ENCODE measurements at regions of chr3 and their contacts with region 1.

Region 1: DNA sequence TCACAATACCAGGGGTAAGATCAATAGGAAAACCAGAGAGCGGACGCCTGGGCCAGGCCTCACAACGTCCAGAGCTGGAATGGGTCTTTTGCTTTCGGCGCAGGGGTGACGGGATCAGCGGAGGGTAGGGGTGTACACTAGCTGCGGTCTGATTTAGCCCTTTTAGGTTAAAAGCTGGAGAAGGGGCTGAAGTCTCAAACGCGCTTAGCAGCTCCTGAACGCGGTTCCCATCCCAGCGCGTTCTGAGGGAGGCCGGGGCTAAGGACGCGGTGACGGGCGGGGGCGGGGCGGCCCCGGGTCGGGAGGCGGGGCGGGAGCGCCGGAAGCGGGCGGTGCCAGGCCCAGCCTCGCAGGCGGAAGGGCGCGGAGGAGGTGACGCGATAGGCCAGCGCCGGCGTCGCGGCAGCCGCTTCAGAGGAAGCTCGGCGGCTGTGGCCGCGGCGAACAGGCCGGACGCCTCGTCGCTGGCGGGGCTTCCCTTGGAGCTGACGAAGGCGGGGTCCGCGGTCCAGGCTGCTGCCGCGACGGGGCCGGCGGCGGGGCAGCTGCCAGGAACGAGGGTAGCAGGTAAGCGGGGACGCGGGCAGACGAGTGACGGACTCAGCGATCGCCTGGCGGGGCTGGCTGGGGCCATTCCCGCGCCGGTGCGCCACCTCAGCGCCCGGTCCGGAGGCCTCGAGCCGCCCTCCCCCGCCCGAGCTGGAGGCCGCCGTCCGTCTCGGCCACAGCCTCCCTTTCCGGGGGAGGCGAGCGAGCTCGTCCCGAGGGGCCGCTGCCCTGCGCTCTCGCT is at the start of gene SENP5:
- DNase-seq: peak; percentile 33
- ATAC-seq: peak; percentile 98
- H3K4me3 ChIP-seq: peak within 1 kb of the TSS; percentile 83 to 96
- H3K27ac ChIP-seq: peak within 1 kb of the TSS; percentile 97
- H3K4me1 ChIP-seq: peaks cover 14% of the 10 kb centered on the region
- H3K27me3 ChIP-seq: no peaks in the 10 kb centered on the region
- CTCF ChIP-seq: no peak
- total RNA-seq, gene SENP5: 40.0 TPM

Region 2: GRCh38 chr3:196377321-196377720 is 490.4 kb before region 1 on chr3:
- CTCF ChIA-PET with region 1: no interaction called
- POLR2A ChIA-PET with region 1: no interaction called
- in situ Hi-C with region 1: no loop called
- intact Hi-C with region 1: no loop called
- DNase-seq: no peak
- ATAC-seq: no peak
- H3K4me3 ChIP-seq: no peak overlapping the region
- H3K27ac ChIP-seq: no peak overlapping the region
- H3K4me1 ChIP-seq: no peaks in the 10 kb centered on the region
- H3K27me3 ChIP-seq: no peaks in the 10 kb centered on the region
- CTCF ChIP-seq: no peak

Region 3: DNA sequence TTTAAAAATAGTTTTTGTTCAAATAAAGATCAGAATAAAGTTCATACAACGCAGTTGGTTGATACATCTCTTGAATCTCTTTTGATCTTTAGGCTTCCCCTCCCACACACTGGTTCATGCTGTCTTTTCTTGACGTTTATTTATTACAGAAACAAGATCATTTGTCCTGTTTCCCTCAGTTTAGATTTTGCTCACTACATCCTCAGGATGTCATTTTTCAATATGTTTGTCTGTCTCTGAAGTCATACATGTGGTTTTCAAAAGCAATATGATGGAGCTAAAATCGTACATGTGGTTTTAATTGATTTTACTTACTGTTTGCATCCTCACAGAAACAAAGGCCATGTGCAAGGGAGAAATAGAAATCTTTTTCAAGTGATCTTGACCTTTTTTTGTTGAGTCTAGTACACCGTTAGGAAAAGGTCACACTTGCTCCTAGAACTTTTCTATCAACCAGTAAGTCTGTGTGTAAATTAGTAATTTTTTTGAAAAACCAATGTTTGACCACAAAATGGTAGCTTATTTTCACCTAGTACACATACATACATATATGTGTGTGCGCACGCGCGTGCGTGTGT is 63.7 kb before region 1 on chr3:
- CTCF ChIA-PET with region 1: no interaction called
- POLR2A ChIA-PET with region 1: interaction called, 10 read pairs
- in situ Hi-C with region 1: no loop called
- intact Hi-C with region 1: no loop called
- DNase-seq: no peak
- ATAC-seq: no peak
- H3K4me3 ChIP-seq: no peak overlapping the region
- H3K27ac ChIP-seq: no peak overlapping the region
- H3K4me1 ChIP-seq: peaks cover 8% of the 10 kb centered on the region
- H3K27me3 ChIP-seq: no peaks in the 10 kb centered on the region
- CTCF ChIP-seq: no peak

Region 4: GRCh38 chr3:196849180-196849741 is 18.4 kb before region 1 on chr3:
- CTCF ChIA-PET with region 1: no interaction called
- POLR2A ChIA-PET with region 1: interaction called, 10 read pairs
- in situ Hi-C with region 1: no loop called
- intact Hi-C with region 1: no loop called
- DNase-seq: no peak
- ATAC-seq: no peak
- H3K4me3 ChIP-seq: no peak overlapping the region
- H3K27ac ChIP-seq: no peak overlapping the region
- H3K4me1 ChIP-seq: no peaks in the 10 kb centered on the region
- H3K27me3 ChIP-seq: no peaks in the 10 kb centered on the region
- CTCF ChIP-seq: no peak